Activated CD8-positive, alpha-beta T cell treated with anti-CD3 and anti-CD28 coated beads for 36 hours (primary cell): ENCODE measurements at regions of chr12 and their contacts with region 1.

Region 1: DNA sequence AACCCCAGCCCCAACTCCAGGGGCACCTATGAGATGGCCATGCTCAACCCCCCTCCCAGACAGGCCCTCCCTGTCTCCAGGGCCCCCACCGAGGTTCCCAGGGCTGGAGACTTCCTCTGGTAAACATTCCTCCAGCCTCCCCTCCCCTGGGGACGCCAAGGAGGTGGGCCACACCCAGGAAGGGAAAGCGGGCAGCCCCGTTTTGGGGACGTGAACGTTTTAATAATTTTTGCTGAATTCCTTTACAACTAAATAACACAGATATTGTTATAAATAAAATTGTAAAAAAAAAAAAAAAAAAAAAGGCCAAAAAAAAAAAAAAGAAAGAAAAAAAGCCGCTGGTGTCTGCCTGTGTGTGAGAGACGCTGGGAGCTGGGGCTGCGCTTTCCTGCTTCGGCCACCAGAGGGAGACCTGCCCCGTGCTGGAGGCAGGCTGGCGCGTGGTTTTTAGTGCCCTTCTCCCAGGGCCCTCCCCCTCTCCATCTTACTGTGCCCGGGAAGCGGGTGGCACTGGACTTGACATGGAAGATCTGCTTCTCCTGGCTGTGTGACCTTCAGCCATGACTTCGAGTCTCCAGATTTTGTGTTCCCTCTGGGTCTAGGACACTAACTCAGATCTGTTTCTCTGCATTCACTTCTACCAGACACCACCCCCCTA is 3.4 kb upstream of the NXPH4 start:
- DNase-seq: peak; percentile 89
- ATAC-seq: peak; percentile 71
- H3K4me3 Mint-ChIP-seq: no peak overlapping the region
- H3K27ac Mint-ChIP-seq: no peak overlapping the region
- H3K4me1 Mint-ChIP-seq: peaks cover 27% of the 10 kb centered on the region
- H3K27me3 Mint-ChIP-seq: peaks cover 38% of the 10 kb centered on the region
- CTCF ChIP-seq: peak; percentile 92

Region 2: DNA sequence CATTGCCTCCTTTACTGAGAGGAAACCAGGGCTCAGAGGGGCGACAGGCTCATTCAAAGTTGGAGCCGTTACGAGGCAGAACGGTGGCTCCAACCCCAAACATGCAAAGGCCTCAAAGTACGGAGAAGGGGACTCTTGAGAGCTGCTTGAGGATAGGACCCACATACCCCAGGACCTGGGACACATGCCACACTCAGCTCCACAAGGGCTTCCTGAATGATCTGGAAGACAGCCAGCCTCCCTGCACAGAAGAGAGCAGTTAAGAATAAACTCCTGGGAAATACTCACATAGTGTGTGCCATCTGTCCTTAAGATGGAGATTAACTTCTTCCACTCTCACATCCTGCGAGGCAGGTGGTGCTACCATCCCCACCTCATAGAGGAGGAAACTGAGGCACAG is 23.1 kb before region 1 on chr12:
- CTCF ChIA-PET with region 1: interaction called, 17 read pairs
- POLR2A ChIA-PET with region 1: no interaction called
- intact Hi-C with region 1: no loop called
- DNase-seq: no peak
- ATAC-seq: no peak
- H3K4me3 Mint-ChIP-seq: no peak overlapping the region
- H3K27ac Mint-ChIP-seq: no peak overlapping the region
- H3K4me1 Mint-ChIP-seq: no peaks in the 10 kb centered on the region
- H3K27me3 Mint-ChIP-seq: no peaks in the 10 kb centered on the region
- CTCF ChIP-seq: no peak

Region 3: DNA sequence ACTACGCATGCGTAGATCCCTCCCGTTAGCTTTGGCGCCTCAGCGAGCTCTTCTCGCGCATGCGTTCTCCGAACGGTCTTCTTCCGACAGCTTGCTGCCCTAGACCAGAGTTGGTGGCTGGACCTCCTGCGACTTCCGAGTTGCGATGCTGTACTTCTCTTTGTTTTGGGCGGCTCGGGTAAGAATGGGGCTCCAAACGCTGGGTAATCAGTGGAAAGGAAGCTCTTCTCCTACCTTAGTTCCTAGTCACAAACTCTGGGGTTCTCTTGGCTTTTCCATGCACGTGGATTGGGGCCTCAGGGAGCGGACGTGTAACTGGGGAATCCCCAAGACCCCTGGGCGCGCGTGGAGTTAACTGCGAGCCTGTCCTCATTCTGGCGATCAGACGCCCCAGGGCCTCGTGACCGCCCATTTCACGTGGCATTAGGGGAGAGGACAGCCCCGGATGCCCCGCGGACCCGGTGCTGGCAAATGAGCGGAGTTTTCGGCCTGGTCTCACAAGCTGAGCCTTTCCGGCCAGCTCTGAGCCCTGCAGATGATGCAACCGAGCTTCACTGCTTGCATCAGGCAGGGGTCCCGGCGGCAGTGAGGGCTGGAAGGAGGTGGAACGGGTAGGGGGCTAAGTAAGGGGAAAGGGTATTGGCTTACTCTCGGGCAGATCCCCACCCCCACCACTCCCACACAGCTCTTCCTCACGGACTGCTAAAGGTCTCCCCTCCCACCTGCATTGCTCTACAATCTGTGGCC is 16.6 kb after region 1 on chr12 and contains the start of gene SHMT2:
- CTCF ChIA-PET with region 1: interaction called, 215 read pairs
- POLR2A ChIA-PET with region 1: interaction called, 99 read pairs
- intact Hi-C with region 1: no loop called
- DNase-seq: peak; percentile 97
- ATAC-seq: peak; percentile 68
- H3K4me3 Mint-ChIP-seq: peak within 1 kb of the TSS; percentile 100
- H3K27ac Mint-ChIP-seq: peak within 1 kb of the TSS; percentile 99
- H3K4me1 Mint-ChIP-seq: peaks cover 74% of the 10 kb centered on the region
- H3K27me3 Mint-ChIP-seq: peaks cover 22% of the 10 kb centered on the region
- CTCF ChIP-seq: no peak
- total RNA-seq, gene SHMT2: 480 to 529 TPM

Region 4: GRCh38 chr12:57248934-57249742 is 36.0 kb after region 1 on chr12:
- CTCF ChIA-PET with region 1: interaction called, 397 read pairs
- POLR2A ChIA-PET with region 1: interaction called, 99 read pairs
- intact Hi-C with region 1: no loop called
- DNase-seq: no peak
- ATAC-seq: peak; percentile 53
- H3K4me3 Mint-ChIP-seq: peak overlapping the region; percentile 15
- H3K27ac Mint-ChIP-seq: no peak overlapping the region
- H3K4me1 Mint-ChIP-seq: peaks cover 7% of the 10 kb centered on the region
- H3K27me3 Mint-ChIP-seq: peaks cover under 1% of the 10 kb centered on the region
- CTCF ChIP-seq: no peak

Region 5: GRCh38 chr12:57280211-57281062 is 67.2 kb after region 1 on chr12:
- CTCF ChIA-PET with region 1: interaction called, 10 read pairs
- POLR2A ChIA-PET with region 1: no interaction called
- intact Hi-C with region 1: no loop called
- DNase-seq: peak; percentile 93
- ATAC-seq: peak; percentile 98
- H3K4me3 Mint-ChIP-seq: peak overlapping the region; percentile 68
- H3K27ac Mint-ChIP-seq: peak overlapping the region; percentile 95
- H3K4me1 Mint-ChIP-seq: peaks cover 23% of the 10 kb centered on the region
- H3K27me3 Mint-ChIP-seq: no peaks in the 10 kb centered on the region
- CTCF ChIP-seq: no peak

Region 6: DNA sequence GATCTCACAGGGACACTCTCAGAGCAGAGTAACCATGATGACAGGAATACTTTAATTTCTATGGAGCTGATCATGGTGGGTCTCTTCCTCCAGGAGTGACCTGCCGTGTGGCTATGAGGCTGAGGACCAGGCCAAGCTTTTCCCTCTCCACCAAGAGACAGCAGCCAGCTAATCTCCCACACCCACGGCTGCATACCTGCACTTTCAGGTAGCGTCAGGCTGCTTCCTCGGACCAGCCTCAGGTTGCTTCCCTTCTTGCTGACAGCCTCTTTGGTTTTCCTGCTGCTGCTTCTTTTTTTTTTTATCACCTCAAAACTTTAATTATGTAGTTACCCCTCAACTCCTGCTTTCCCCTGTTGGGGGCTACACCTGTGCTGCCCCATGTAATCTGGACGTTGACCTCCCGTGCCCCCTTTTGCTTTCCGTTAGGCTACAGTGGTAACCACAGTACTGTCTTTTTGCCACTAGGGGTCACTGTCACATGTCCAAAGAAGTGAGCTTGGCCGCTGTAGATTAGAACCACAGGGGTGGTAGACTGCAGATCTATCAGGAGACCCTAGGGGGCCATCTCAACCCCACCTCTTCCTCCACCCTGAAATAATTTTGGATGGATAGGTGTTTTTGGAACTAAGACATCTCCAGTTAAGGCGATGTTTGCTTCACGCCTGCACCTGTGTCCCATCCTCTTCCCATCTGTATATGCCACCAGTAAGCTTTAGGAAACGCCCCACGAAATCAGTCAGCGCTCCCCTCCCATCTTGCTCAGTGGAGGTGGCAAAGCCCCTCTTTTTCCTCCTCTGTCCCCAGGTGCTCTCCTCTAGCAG is 370.0 kb after region 1 on chr12:
- CTCF ChIA-PET with region 1: no interaction called
- POLR2A ChIA-PET with region 1: no interaction called
- intact Hi-C with region 1: no loop called
- DNase-seq: peak; percentile 83
- ATAC-seq: peak; percentile 100
- H3K4me3 Mint-ChIP-seq: no peak overlapping the region
- H3K27ac Mint-ChIP-seq: no peak overlapping the region
- H3K4me1 Mint-ChIP-seq: no peaks in the 10 kb centered on the region
- H3K27me3 Mint-ChIP-seq: no peaks in the 10 kb centered on the region
- CTCF ChIP-seq: peak; percentile 96